ENCODE measurements at regions of chr9 and their contacts with region 1.

Region 1: DNA sequence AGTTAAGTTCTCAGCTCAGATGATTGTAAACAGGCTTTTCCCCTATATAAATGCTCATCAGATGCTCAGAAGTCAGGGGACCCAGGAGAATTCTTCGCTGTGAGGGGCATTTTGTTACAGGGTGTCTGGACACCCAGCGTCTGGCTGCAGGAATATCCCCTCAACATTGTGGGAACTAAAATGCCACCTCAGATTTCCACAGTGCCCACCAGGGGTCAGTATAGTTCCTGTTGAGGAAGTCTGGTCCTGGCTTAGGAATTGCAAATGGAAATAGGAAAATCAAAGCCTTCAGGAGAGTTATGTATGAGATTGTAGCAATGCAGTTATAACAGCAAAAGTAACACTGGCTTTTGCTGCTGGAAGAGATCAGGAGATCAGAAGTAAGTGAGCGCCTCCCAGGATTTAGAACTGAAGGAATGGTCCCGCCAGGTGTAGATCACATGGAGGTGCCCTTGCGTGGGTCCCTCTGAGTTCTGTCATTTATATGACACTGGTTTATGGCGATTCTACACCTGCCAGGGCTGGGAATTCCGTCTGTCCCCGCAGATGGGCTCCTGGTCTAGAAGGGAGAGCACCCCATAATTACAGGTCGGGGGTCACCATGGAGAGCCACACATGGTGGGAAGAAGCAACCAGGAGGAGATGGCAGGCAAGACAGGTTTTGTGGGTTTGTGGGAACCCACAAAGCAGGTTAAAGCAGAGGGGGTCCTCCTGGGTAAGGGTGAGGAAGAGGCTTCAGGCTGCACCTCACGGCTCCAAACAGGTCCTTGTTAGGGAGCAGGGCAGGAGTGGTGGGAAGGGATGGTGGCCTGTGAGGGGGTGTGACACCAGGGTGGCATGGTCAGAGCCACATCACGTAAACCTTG is 47.0 kb upstream of the CTSL start:
- DNase-seq: peak; percentile 76 to 78
- H3K4me3 ChIP-seq: no peak overlapping the region
- H3K4me1 ChIP-seq: no peaks in the 10 kb centered on the region
- H3K27me3 ChIP-seq: no peaks in the 10 kb centered on the region

Region 2: DNA sequence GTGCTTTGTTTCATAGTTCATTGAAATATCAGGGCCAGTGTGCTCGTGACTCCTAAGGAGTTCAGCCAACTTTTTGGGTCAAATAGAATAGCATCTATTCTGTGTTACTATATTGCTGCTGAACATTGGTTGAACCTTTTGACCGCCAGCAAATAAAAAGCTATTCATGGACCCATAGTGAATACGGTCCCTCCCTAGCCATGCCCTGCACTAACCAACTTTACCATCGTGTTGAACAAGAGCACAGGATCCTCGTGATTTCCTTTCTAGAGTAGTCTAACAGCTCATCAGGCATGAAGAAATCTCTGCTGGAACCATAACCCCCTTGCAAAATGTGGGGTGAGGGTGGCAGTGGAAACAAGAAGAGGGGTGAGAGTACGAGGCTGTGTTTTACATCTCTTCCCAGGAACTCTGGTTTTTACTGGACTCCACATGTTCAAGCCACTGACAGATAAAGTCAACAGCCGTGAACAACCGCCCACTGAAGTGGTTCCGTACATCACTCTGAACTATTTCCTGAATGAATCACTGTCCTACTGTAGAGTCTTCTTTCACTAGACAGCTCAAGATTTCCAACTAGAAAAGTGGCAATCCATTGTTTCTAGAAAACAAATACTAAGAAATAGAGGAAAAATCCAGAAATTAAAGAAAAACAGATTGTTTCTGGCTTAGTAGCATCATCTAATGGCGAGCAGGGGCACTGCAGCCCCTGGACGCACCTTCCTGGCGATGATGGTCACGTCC is 133.7 kb after region 1 on chr9:
- in situ Hi-C with region 1: loop called (anchors 5 kb)
- DNase-seq: peak; percentile 46 to 50
- H3K4me3 ChIP-seq: no peak overlapping the region
- H3K4me1 ChIP-seq: no peaks in the 10 kb centered on the region
- H3K27me3 ChIP-seq: no peaks in the 10 kb centered on the region; the same call in 1 of the 2 replicates

Measured in HAP-1 (cell line).